Panc1 (cell line): ENCODE measurements at regions of chr10 and their contacts with region 1.

Region 1: GRCh38 chr10:114821293-114821914 is at the start of gene FHIP2A:
- DNase-seq: peak; percentile 39
- ATAC-seq: peak; percentile 96
- H3K4me3 ChIP-seq: peak within 1 kb of the TSS; percentile 79 to 80
- H3K27ac ChIP-seq: peak within 1 kb of the TSS; percentile 94
- H3K4me1 ChIP-seq: peaks cover 42% of the 10 kb centered on the region
- H3K27me3 ChIP-seq: no peaks in the 10 kb centered on the region
- CTCF ChIP-seq: peak; percentile 100
- total RNA-seq, gene FHIP2A: 32.6 TPM

Region 2: GRCh38 chr10:114477285-114477684 is 344.1 kb before region 1 on chr10:
- CTCF ChIA-PET with region 1: interaction called, 4 read pairs
- POLR2A ChIA-PET with region 1: interaction called, 12 read pairs
- in situ Hi-C with region 1: no loop called
- intact Hi-C with region 1: no loop called
- DNase-seq: no peak
- ATAC-seq: no peak
- H3K4me3 ChIP-seq: no peak overlapping the region
- H3K27ac ChIP-seq: no peak overlapping the region
- H3K4me1 ChIP-seq: peaks cover 14% of the 10 kb centered on the region
- H3K27me3 ChIP-seq: no peaks in the 10 kb centered on the region
- CTCF ChIP-seq: no peak

Region 3: GRCh38 chr10:114678820-114679219 is 142.6 kb before region 1 on chr10:
- CTCF ChIA-PET with region 1: no interaction called
- POLR2A ChIA-PET with region 1: interaction called, 11 read pairs
- in situ Hi-C with region 1: no loop called
- intact Hi-C with region 1: no loop called
- DNase-seq: no peak
- ATAC-seq: peak; percentile 55
- H3K4me3 ChIP-seq: no peak overlapping the region
- H3K27ac ChIP-seq: peak overlapping the region; percentile 100
- H3K4me1 ChIP-seq: peaks cover 61% of the 10 kb centered on the region
- H3K27me3 ChIP-seq: no peaks in the 10 kb centered on the region
- CTCF ChIP-seq: no peak

Region 4: DNA sequence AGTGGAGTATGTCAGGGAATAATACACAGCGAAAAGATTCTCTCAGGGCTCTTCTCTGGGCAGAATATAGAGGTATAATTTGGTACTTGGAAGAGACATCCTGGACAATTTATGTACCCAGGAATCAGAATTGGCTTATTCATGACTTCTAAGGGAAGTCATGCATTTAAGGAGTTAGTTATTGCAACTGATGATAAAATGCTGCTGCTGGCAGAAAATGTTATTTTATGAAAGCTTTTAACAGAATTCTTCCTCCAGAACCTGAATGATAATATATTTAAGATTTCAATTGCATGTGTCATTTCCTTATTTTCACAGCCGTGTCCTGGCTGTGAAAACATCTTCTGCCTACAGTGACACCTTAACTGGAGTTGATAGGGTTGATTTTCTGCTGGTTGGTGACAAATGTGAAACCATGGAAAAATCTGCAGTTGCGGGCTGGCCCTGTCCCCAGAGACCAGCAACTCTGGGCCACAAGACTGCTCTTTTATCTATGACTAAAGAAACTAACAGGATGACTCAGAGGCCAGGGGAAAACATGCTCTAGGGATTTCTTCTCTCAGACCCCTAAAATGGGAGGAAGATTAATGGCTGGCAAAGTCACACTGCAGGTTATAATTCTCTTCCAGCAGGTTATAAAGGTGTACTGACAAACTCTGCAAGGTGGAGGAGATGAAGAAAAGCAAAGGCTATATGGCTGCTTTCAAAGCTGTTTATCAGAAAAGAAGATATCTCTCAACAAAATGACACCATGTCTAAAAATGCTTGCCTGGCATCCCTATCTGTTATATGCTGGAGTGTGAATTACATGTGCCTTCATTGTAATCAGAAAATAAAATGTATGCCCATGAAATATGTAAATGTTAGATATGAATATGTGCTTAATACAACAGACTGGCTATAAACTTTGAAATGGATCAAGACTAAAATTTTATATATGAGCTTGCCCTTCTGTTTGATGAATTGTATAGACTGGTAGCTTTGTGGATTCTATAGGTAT is 104.5 kb after region 1 on chr10:
- CTCF ChIA-PET with region 1: no interaction called
- POLR2A ChIA-PET with region 1: interaction called, 14 read pairs
- in situ Hi-C with region 1: no loop called
- intact Hi-C with region 1: no loop called
- DNase-seq: no peak
- ATAC-seq: peak; percentile 88
- H3K4me3 ChIP-seq: no peak overlapping the region
- H3K27ac ChIP-seq: no peak overlapping the region
- H3K4me1 ChIP-seq: peaks cover 10% of the 10 kb centered on the region
- H3K27me3 ChIP-seq: no peaks in the 10 kb centered on the region
- CTCF ChIP-seq: no peak

Region 5: DNA sequence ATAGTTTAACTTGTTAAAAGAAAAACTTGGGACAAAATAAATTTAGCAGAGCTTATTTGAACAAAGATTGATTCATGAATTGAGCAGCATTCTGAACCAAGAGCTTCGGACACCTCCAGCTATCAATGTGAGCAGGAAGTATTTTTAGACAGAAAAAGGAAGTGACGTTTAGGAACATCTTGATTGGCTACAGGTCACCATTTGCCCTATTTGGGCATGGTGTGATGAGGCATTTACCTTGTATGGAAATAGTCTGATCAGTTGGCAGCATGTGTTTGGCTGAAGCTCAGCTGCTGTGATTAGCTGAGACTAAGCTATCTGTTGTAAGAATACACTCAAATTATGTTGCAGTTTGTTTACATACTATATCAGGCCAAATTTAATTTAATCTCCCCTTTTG is 456.9 kb after region 1 on chr10:
- CTCF ChIA-PET with region 1: interaction called, 12 read pairs
- POLR2A ChIA-PET with region 1: no interaction called
- in situ Hi-C with region 1: no loop called
- intact Hi-C with region 1: no loop called
- DNase-seq: no peak
- ATAC-seq: no peak
- H3K4me3 ChIP-seq: no peak overlapping the region
- H3K27ac ChIP-seq: no peak overlapping the region
- H3K4me1 ChIP-seq: no peaks in the 10 kb centered on the region
- H3K27me3 ChIP-seq: no peaks in the 10 kb centered on the region
- CTCF ChIP-seq: no peak